ENCODE measurements at regions of chr6 and their contacts with region 1.

Region 1: GRCh38 chr6:137707590-137708360 is 159.3 kb upstream of the TNFAIP3 start:
- DNase-seq: peak; percentile 76 to 89
- H3K4me3 ChIP-seq: no peak overlapping the region
- CTCF ChIP-seq: no peak
- POLR2A ChIP-seq: no peak

Region 2: DNA sequence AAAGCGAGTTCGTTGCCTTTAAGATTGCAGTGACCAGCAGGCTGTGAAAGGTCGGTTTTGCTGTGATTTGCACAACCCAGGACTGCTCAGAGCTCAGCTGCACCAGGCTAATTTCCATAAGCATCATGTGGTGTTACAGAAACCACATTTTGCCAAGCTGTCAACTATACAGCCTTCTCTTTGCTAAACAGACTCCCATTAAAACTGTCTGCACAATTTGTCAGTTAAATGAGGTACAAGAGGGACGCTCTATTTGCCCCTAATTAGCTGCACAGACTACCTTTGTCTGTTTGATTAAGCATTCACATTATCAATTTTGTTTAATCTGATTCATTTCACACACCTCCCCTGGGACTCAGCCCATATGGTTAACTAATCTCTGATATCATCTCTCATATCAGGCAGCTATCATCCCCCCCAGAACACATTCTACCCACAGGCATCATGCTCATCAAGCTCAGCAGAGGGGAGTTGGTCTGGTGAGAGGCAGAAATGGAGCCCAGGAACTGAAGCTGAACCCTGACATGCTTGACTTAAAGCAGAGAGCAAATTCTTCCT is 275.6 kb before region 1 on chr6:
- intact Hi-C with region 1: no loop called
- DNase-seq: no peak
- H3K4me3 ChIP-seq: no peak overlapping the region
- CTCF ChIP-seq: no peak
- POLR2A ChIP-seq: no peak

Region 3: GRCh38 chr6:137866914-137867684 is 159.3 kb after region 1 on chr6 and contains the start of gene TNFAIP3:
- intact Hi-C with region 1: loop called (anchors 5 kb)
- DNase-seq: peak; percentile 92 to 99
- H3K4me3 ChIP-seq: peak within 1 kb of the TSS; percentile 65
- CTCF ChIP-seq: peak in 1 of 3 donors; percentile 53
- POLR2A ChIP-seq: no peak
- total RNA-seq, gene TNFAIP3: 13.4 to 29.9 (median 26.2) TPM

Region 4: DNA sequence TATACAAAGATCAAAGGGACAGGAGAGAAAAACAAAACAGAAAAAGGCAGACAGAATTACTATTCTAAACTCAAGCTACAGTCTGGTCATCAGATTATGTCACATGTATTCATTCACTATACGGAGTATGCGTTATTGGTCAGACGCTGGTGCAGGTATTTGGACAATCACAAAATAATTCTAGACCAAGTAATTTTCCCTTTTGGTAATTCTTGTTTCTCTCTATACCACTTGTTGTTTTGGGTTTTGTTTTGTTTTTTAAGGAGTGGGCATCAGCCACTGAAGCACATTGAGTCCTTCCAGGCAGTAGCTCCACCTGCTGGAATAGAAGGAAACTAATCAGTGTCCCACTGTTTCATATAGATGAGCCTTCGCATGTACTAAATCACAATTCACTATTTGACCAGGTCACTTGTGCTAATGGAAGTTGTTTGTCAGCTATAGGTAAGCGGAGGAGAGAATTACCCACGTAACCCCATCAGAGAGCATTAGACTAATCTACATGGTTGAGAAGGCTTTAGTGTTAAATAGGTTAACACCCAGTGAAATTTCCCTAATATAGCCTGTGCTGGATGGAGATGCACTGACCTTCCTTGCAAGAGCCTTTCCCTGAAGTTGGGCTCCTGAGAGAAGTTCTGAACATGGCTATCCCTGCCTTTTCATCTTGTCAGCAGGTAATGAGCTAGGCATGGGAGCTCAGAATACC is 237.2 kb after region 1 on chr6:
- intact Hi-C with region 1: loop called (anchors 2 kb)
- DNase-seq: no peak
- H3K4me3 ChIP-seq: no peak overlapping the region
- CTCF ChIP-seq: no peak
- POLR2A ChIP-seq: no peak

Measured in lower leg skin (tissue), 4 donors.